Activated CD8-positive, alpha-beta T cell treated with anti-CD3 and anti-CD28 coated beads, Interleukin-2, amount 10 ng/mL, durations not matched to agents 7 days and 5 days (primary cell): ENCODE measurements at regions of chr5 and their contacts with region 1.

Region 1: DNA sequence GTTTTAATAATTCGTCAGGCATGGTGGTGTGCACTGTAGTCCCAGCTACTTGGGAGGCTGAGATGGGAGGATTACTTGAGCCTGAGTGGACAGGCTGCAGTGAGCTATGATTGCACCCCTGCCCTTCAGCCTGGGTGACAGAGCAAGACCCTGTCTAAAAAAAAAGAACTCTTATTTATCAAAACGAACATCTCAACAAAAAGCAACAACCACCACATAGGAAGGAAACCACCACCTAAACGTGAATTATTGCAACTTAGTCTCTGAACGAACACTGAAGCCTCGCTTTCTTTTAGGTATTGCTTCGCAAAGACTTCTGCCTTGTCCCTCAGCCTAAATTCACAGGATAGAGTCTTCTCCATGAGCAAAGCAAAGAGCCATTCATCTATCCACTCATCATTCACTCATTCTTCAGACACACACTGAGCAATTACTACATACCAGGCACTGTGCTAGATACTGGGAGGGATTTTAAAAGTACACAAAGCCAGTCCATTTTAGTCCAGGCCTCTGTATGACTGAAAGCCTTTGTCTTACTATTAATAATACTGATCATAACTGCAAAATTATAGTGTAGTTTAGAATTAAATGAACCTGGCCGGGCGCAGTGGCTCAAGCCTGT is 57.4 kb downstream of the THBS4 start:
- DNase-seq: no peak
- ATAC-seq: peak; percentile 42
- H3K4me3 Mint-ChIP-seq: peak overlapping the region; percentile 43
- H3K27ac Mint-ChIP-seq: peak overlapping the region; percentile 84
- H3K4me1 Mint-ChIP-seq: peaks cover 24% of the 10 kb centered on the region
- H3K27me3 Mint-ChIP-seq: no peaks in the 10 kb centered on the region

Region 2: DNA sequence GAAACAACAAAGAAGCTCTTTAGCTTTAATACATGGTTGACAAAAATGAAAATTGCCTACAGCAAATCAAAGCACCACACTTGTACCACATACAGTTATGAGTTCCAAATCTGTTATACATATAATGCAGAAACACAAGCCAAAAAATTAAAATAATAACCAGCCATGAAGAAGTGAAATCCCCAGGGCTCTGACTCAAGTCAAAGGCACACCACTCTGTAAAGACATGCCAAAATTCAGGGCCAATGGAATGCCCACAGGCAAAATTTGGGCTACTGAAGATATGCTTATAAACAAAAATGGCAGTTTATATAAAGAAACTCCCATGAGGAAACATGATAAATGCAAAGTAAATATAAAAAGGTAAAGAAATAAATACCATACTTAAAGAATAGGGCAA is 28.5 kb before region 1 on chr5:
- CTCF ChIA-PET with region 1: no interaction called
- POLR2A ChIA-PET with region 1: no interaction called
- DNase-seq: no peak
- ATAC-seq: no peak
- H3K4me3 Mint-ChIP-seq: no peak overlapping the region
- H3K27ac Mint-ChIP-seq: no peak overlapping the region
- H3K4me1 Mint-ChIP-seq: peaks cover 8% of the 10 kb centered on the region
- H3K27me3 Mint-ChIP-seq: no peaks in the 10 kb centered on the region

Region 3: DNA sequence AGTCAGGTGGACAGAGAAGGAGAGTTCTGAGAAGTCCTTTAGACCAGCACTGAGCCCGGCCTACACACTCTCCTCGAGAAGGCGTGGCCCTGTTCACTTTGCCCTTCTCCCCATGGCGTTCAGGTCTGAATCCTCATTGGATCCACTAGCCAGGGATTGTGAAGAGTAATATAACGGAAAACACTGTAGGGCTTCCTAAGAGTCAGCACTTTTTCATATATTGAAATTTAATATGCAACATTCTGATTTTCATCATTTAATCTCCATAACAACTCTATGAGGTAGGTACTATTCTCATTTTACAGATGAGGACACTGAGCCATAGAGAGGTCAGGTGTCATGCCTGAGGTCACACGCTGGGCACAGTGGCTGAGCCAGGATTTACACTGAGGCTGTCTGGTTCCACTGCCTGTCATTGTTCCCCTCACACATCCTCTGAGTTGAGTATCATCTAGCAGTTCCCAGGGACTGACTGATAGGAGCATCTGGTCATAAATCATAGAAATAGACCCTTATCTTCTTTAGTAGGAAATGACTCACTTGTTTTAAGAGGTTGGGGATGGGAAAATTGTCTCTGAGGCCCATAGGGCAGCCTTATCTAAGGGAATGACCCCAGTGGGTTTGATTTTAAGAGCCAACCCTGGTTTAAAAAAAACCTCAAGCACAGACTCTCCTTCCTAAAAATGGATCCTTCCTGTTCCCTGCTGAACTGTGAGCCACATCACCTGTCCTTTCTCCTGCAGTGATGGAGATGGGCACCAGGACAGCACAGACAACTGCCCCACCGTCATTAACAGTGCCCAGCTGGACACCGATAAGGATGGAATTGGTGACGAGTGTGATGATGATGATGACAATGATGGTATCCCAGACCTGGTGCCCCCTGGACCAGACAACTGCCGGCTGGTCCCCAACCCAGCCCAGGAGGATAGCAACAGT is 16.2 kb before region 1 on chr5:
- CTCF ChIA-PET with region 1: interaction called, 10 read pairs
- POLR2A ChIA-PET with region 1: no interaction called
- DNase-seq: no peak
- ATAC-seq: no peak
- H3K4me3 Mint-ChIP-seq: no peak overlapping the region
- H3K27ac Mint-ChIP-seq: no peak overlapping the region
- H3K4me1 Mint-ChIP-seq: no peaks in the 10 kb centered on the region
- H3K27me3 Mint-ChIP-seq: no peaks in the 10 kb centered on the region

Region 4: GRCh38 chr5:80141147-80141671 is 48.6 kb after region 1 on chr5:
- CTCF ChIA-PET with region 1: interaction called, 15 read pairs
- POLR2A ChIA-PET with region 1: no interaction called
- DNase-seq: no peak
- ATAC-seq: no peak
- H3K4me3 Mint-ChIP-seq: no peak overlapping the region
- H3K27ac Mint-ChIP-seq: peak overlapping the region; percentile 54
- H3K4me1 Mint-ChIP-seq: peaks cover 59% of the 10 kb centered on the region
- H3K27me3 Mint-ChIP-seq: no peaks in the 10 kb centered on the region

Region 5: DNA sequence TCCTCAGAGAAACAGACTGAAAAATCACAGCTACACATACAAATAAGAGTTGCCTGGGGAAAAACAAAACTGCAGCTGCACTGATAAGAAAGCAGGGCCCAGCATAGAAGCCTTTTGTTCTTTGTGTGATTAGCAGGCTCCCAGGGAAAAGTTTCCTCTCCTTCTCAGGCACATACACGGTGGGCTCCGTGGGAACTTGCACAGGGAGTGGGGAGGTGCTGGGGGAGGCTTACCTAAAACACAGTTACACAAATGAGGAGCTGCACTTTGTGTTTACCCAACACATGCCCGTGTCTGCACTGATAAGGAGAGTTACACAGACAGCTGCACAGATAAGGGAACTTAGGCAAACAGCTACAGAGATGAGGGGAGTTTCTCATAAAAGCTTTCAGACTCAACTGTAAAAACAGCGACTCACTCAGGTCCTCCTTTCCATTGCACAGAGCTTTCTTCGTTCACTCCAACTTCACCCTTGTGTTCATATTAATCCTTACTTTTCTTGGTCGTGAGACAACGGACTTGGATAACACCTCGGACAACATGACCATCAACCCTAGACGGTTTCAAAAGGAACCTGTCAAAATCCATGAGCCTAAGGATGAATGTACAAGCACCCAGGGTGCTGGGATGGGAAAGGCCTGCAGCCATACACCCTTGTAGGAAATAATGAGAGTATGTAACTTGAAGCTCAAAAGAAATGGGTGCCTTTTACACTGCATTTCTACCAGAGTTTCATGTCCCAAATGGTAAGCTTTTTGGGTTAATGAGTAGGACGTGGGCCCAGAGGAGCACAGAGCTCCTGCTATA is 112.4 kb after region 1 on chr5:
- CTCF ChIA-PET with region 1: interaction called, 13 read pairs
- POLR2A ChIA-PET with region 1: no interaction called
- DNase-seq: no peak
- ATAC-seq: peak; percentile 41
- H3K4me3 Mint-ChIP-seq: no peak overlapping the region
- H3K27ac Mint-ChIP-seq: peak overlapping the region; percentile 48
- H3K4me1 Mint-ChIP-seq: peaks cover 42% of the 10 kb centered on the region
- H3K27me3 Mint-ChIP-seq: no peaks in the 10 kb centered on the region

Region 6: GRCh38 chr5:80255732-80256479 is 163.3 kb after region 1 on chr5 and contains the start of gene SERINC5:
- CTCF ChIA-PET with region 1: interaction called, 36 read pairs
- POLR2A ChIA-PET with region 1: interaction called, 5 read pairs
- DNase-seq: peak; percentile 88
- ATAC-seq: peak; percentile 80
- H3K4me3 Mint-ChIP-seq: peak within 1 kb of the TSS; percentile 92
- H3K27ac Mint-ChIP-seq: peak within 1 kb of the TSS; percentile 95
- H3K4me1 Mint-ChIP-seq: peaks cover 51% of the 10 kb centered on the region
- H3K27me3 Mint-ChIP-seq: no peaks in the 10 kb centered on the region
- total RNA-seq, gene SERINC5: 52.5 to 54.5 TPM

Region 7: GRCh38 chr5:80275347-80275746 is 182.8 kb after region 1 on chr5:
- CTCF ChIA-PET with region 1: interaction called, 35 read pairs
- POLR2A ChIA-PET with region 1: interaction called, 3 read pairs
- DNase-seq: peak; percentile 50
- ATAC-seq: peak; percentile 63
- H3K4me3 Mint-ChIP-seq: no peak overlapping the region
- H3K27ac Mint-ChIP-seq: no peak overlapping the region
- H3K4me1 Mint-ChIP-seq: peaks cover 21% of the 10 kb centered on the region
- H3K27me3 Mint-ChIP-seq: no peaks in the 10 kb centered on the region

Region 8: GRCh38 chr5:80308526-80308925 is 215.9 kb after region 1 on chr5:
- CTCF ChIA-PET with region 1: interaction called, 67 read pairs
- POLR2A ChIA-PET with region 1: interaction called, 3 read pairs
- DNase-seq: no peak
- ATAC-seq: no peak
- H3K4me3 Mint-ChIP-seq: no peak overlapping the region
- H3K27ac Mint-ChIP-seq: no peak overlapping the region
- H3K4me1 Mint-ChIP-seq: peaks cover 1% of the 10 kb centered on the region
- H3K27me3 Mint-ChIP-seq: peaks cover 6% of the 10 kb centered on the region